Activated CD4-positive, alpha-beta T cell treated with anti-CD3 and anti-CD28 coated beads, Interleukin-2, amount 10 ng/mL, durations not matched to agents 24 days and 14 days (primary cell): ENCODE measurements at regions of chr1 and their contacts with region 1.

Region 1: DNA sequence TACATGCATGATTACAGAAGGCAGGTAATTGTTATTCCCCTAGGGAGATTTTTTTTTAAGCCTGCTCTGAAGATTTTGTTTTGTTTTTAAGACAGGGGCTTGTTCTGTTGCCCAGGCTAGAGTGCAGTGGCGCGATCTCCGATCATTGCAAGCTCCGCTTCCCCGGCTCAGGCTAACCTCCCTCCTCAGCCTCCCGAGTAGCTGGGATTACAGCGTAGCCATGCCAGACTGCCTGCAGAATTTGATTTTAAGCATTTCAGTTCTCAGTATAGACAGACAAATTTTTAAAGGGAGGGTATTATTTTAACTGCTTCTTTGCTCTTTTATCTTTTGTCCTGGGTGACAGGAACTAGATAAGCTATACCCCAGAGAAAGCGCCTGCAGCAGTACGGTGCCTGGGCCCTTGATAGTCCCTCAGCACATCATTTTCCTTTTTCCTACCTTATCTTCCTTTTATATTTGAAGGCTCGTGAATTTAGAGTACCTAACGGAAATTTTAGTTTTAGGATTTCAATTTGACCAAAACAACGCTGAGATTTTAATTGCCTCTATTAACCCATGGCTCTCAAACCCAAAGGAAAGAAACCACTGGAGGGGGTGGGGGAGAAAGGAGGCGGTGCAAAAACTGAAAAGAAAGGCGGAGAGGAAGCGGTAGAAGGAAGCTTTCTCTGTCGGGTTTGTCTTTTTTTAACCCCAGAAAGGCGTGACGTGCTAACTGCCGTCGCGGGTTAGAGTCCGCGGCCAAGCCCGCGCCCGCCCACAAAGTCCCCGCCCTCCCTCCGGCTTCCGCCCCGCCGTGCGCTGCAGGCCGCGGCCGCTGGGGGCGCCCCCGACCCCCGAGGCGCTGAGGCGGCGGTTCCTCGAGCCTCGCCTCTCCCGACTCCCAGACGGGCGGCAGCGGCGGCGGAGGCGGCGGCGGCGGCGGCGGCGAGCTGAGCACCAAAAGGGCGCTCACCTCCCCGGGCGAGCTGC is at the start of gene EEIG2:
- DNase-seq: peak; percentile 97
- H3K4me3 Mint-ChIP-seq: peak within 1 kb of the TSS; percentile 93
- H3K27ac Mint-ChIP-seq: peak within 1 kb of the TSS; percentile 90
- H3K4me1 Mint-ChIP-seq: peaks cover 30% of the 10 kb centered on the region
- H3K27me3 Mint-ChIP-seq: peaks cover 8% of the 10 kb centered on the region
- total RNA-seq, gene EEIG2: 13.4 and 14.0 TPM in 2 replicates

Region 2: GRCh38 chr1:108199781-108200570 is 359.5 kb before region 1 on chr1 and contains the start of gene SLC25A24:
- intact Hi-C with region 1: loop called (anchors 5 kb)
- DNase-seq: peak; percentile 96
- H3K4me3 Mint-ChIP-seq: peak within 1 kb of the TSS; percentile 90
- H3K27ac Mint-ChIP-seq: peak within 1 kb of the TSS; percentile 83
- H3K4me1 Mint-ChIP-seq: peaks cover 27% of the 10 kb centered on the region
- H3K27me3 Mint-ChIP-seq: peaks cover 13% of the 10 kb centered on the region
- total RNA-seq, gene SLC25A24: 16.9 and 18.4 TPM in 2 replicates

Region 3: DNA sequence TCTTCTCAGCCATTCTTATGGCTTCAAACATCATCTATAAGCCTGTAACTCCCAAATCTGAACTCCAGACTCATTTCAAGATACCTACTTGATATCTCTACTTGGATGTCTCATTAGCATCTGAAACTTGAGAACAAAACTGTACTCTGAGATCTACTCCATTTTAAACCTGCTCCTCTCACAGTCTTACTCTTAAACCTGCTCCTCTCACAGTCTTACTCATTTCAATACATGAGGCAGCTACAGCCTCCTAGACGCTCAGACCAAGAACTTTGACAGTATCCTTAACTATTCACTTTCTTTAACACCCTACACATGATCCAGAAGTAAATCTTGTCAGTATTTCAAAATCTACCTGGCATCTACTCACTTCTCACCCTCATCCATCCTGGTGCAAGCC is 55.1 kb before region 1 on chr1:
- intact Hi-C with region 1: loop called (anchors 2 kb)
- DNase-seq: no peak
- H3K4me3 Mint-ChIP-seq: no peak overlapping the region
- H3K27ac Mint-ChIP-seq: no peak overlapping the region
- H3K4me1 Mint-ChIP-seq: no peaks in the 10 kb centered on the region
- H3K27me3 Mint-ChIP-seq: peaks cover 40% of the 10 kb centered on the region

Region 4: DNA sequence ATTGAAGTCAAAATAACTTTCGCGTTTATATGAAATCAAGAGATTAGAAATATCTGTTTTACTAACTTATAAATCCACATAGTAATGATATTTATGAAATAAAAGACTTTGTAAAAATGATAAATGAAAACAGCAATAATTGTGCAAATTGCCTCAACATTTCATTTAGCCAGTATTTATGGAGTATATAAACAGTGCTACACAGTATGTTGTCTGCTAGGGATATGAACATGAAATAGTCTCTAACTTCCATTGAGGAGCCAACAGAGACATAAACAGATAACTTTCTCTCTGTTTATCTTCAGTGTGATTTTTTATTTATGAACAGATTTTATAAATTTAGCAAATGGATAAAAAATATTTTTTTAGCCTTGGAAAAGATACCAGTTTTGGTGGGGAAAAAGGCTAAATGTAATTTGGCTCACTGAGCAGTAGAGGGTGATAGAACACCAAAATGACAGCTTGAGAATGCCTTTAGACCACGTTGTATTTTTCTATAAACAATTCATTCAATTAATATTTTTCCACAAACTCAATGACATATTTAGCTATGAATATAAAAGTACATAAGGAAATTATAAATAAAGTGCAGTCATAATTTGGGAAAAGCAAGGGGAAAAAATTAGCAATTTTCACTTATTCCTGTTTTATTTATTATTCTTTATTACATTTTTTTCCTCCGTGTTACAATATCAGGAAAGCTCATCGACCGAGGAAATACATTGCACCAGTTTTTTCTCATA is 47.1 kb before region 1 on chr1:
- intact Hi-C with region 1: loop called (anchors 1 kb)
- DNase-seq: no peak
- H3K4me3 Mint-ChIP-seq: no peak overlapping the region
- H3K27ac Mint-ChIP-seq: no peak overlapping the region
- H3K4me1 Mint-ChIP-seq: no peaks in the 10 kb centered on the region
- H3K27me3 Mint-ChIP-seq: peaks cover 55% of the 10 kb centered on the region

Region 5: GRCh38 chr1:108570128-108570527 is 10.6 kb after region 1 on chr1:
- intact Hi-C with region 1: loop called (anchors 1 kb)
- DNase-seq: peak; percentile 73
- H3K4me3 Mint-ChIP-seq: no peak overlapping the region
- H3K27ac Mint-ChIP-seq: no peak overlapping the region
- H3K4me1 Mint-ChIP-seq: no peaks in the 10 kb centered on the region
- H3K27me3 Mint-ChIP-seq: no peaks in the 10 kb centered on the region